ENCODE measurements at regions of chr21 and their contacts with region 1.

Region 1: DNA sequence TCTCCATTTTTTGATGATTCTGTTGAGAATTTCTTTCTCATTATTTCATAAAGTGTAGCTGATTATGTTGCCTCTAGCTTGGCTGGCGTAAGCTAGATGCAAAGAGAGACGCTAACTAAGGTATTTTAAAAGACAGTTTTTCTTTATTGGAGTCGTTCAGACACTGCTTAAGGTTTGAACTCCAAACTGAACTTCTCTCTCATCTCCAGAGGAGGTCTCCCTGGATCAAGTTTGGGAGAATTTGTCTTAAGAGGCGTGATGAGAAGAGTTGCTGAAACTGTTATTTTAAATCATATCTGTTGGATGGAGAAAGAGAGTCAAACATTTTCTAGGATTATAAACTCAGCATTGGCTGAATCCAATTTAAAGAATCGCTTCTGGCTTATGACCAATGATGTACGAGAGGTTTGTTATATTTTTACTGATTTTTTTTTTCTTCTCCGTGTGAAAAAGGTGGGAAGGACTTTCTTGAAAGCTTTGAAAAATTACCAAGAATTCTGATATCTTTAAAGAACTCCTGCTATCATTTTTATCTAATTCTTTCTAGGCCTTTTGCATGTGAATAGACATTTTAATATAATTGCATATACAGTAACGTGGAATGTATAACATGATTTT is 34.0 kb downstream of the MAP3K7CL start:
- DNase-seq: peak; percentile 68
- H3K4me3 ChIP-seq: no peak overlapping the region
- H3K27ac ChIP-seq: peak overlapping the region; percentile 19
- H3K4me1 ChIP-seq: peaks cover 23% of the 10 kb centered on the region
- H3K27me3 ChIP-seq: no peaks in the 10 kb centered on the region
- CTCF ChIP-seq: peak; percentile 63 to 78

Region 2: DNA sequence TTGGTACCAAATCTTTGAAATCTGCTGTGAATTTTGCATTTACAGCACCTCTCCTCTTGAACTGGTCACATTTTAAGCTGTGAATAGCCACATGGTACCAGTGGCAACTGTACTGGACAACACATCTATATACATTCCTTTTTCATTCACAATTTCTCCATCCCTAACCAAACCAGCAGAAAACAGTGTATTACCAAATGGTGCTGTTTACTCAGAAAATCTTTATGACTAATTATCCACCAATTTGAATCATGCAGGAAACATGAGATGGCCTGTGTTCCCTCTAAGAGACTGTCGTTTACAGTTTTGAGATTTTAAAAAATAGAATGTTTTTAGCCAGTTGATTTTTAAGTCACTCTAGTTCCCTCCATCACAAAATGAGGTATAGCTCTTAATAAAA is 73.4 kb before region 1 on chr21:
- CTCF ChIA-PET with region 1: no interaction called
- dilution Hi-C with region 1: no loop called
- in situ Hi-C with region 1: no loop called
- intact Hi-C with region 1: loop called (anchors 1 kb)
- DNase-seq: peak; percentile 68
- H3K4me3 ChIP-seq: no peak overlapping the region
- H3K27ac ChIP-seq: no peak overlapping the region
- H3K4me1 ChIP-seq: peaks cover 16% of the 10 kb centered on the region
- H3K27me3 ChIP-seq: no peaks in the 10 kb centered on the region
- CTCF ChIP-seq: no peak

Region 3: DNA sequence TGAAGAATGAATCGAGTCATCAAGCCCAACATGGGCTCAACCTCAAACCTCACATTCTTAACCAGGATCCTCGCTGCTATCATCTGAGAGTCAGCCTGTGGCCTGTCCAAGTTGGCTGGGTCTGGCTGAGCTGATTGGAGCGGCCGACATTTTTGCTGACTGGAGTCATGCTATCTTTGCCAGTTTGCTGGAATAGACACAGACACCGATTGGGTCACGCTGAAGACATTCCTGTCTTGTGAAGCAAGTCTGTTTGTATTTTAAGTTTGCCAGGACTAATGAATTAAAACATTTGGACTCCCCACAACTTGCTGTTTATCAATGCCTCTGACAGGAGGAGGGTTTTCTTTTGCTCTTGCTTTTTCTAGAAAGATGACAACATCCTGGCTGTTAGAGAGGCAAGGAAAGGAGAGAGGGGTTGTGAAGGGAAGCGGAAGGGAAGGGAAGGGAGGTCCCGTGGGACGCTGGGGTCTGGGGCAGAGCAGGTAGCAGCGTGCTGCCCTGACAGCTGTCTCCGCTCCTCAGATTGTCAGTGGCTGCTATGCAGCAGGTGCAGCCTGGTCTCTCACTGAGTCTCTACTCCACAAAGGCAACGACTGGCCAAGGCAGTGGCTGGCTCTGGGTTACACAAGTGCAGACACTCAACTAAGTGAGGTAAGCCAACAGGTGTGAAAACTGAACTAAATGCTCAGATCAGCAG is 34.0 kb before region 1 on chr21 and contains the start of gene MAP3K7CL:
- CTCF ChIA-PET with region 1: no interaction called
- dilution Hi-C with region 1: no loop called
- in situ Hi-C with region 1: no loop called
- intact Hi-C with region 1: no loop called
- DNase-seq: peak; percentile 94
- H3K4me3 ChIP-seq: no peak within 1 kb of the TSS
- H3K27ac ChIP-seq: peak within 1 kb of the TSS; percentile 46
- H3K4me1 ChIP-seq: peaks cover 18% of the 10 kb centered on the region
- H3K27me3 ChIP-seq: no peaks in the 10 kb centered on the region
- CTCF ChIP-seq: no peak
- total RNA-seq, gene MAP3K7CL: 6.0 to 7.7 TPM

Region 4: DNA sequence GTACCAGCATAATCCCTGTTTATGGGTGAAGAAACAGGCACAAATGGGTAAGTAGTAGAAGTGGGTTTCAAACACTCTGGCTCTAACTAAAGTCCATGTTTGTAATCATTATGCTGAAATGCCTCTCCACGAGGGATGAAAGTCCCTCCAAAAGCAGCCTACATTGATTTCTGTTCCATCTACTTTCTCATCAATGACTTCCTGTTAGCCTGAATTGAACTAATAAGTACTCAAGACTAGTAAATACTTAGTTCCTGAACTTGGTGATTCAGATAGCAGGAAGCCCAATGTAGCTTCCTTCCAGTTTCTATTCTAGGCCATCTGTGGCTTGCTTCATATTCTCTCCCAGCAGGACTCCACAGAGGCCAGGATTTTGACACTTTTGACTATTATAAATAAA is 122.9 kb after region 1 on chr21:
- CTCF ChIA-PET with region 1: no interaction called
- dilution Hi-C with region 1: no loop called
- in situ Hi-C with region 1: loop called (anchors 10 kb)
- intact Hi-C with region 1: no loop called
- DNase-seq: no peak
- H3K4me3 ChIP-seq: no peak overlapping the region
- H3K27ac ChIP-seq: no peak overlapping the region
- H3K4me1 ChIP-seq: no peaks in the 10 kb centered on the region
- H3K27me3 ChIP-seq: no peaks in the 10 kb centered on the region
- CTCF ChIP-seq: no peak

Region 5: DNA sequence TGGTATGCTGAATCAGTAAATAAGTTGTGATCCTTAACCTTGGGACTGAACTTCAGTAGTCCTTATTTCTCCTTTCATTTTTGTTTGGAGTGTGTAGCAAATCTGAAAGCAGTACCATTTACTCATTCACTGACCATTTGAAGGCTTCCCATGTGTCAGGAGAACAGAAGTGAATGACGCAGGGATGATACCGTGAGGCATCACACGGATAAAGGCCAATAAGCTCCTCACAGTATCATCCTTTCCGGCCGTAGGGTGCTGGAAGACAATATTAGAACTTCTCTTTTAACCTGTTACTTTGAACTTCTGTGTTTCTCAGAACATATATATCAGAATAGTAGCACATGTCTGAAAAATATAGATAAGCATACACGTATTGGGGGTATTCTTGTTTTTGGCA is 155.6 kb after region 1 on chr21:
- CTCF ChIA-PET with region 1: no interaction called
- dilution Hi-C with region 1: no loop called
- in situ Hi-C with region 1: no loop called
- intact Hi-C with region 1: no loop called
- DNase-seq: no peak
- H3K4me3 ChIP-seq: no peak overlapping the region
- H3K27ac ChIP-seq: no peak overlapping the region
- H3K4me1 ChIP-seq: peaks cover 7% of the 10 kb centered on the region
- H3K27me3 ChIP-seq: no peaks in the 10 kb centered on the region
- CTCF ChIP-seq: no peak

Region 6: GRCh38 chr21:29372063-29372802 is 207.8 kb after region 1 on chr21:
- CTCF ChIA-PET with region 1: interaction called, 3 read pairs
- dilution Hi-C with region 1: no loop called
- in situ Hi-C with region 1: loop called (anchors 10 kb)
- intact Hi-C with region 1: loop called (anchors 1 kb)
- DNase-seq: peak; percentile 52
- H3K4me3 ChIP-seq: no peak overlapping the region
- H3K27ac ChIP-seq: no peak overlapping the region
- H3K4me1 ChIP-seq: no peaks in the 10 kb centered on the region
- H3K27me3 ChIP-seq: no peaks in the 10 kb centered on the region
- CTCF ChIP-seq: peak; percentile 56 to 72

Region 7: GRCh38 chr21:29849735-29850176 is 685.3 kb after region 1 on chr21:
- CTCF ChIA-PET with region 1: no interaction called
- dilution Hi-C with region 1: no loop called
- in situ Hi-C with region 1: no loop called
- intact Hi-C with region 1: loop called (anchors 1 kb)
- DNase-seq: peak; percentile 23
- H3K4me3 ChIP-seq: no peak overlapping the region
- H3K27ac ChIP-seq: no peak overlapping the region
- H3K4me1 ChIP-seq: no peaks in the 10 kb centered on the region
- H3K27me3 ChIP-seq: no peaks in the 10 kb centered on the region
- CTCF ChIP-seq: peak; percentile 65 to 93

Measured in mammary epithelial cell (primary cell).